ENCODE measurements at regions of chr2 and their contacts with region 1.

Region 1: DNA sequence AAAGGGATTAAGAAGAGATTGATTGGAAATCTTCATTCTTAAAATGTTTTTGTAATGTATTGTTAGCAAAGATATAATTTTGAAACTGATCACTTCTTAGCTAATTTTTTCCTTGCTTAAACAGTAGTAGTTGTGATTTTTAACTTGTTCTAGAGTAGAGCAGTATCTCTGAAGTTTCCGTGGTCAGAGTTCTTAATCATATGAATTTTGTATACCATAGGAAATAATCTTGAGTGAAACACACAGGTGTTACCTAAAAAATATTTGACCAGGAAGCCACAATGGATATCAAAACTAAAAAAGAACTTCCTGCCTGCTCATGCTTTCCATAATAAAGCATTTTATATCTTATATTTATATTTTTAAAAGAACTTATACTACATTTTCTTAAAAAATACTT is 907.1 kb downstream of the ERBB4 start:
- DNase-seq: no peak
- H3K4me3 ChIP-seq: no peak overlapping the region
- H3K27ac ChIP-seq: no peak overlapping the region
- H3K4me1 ChIP-seq: no peaks in the 10 kb centered on the region
- H3K27me3 ChIP-seq: no peaks in the 10 kb centered on the region
- CTCF ChIP-seq: no peak
- EP300 ChIP-seq: no peak
- POLR2A ChIP-seq: no peak

Region 2: DNA sequence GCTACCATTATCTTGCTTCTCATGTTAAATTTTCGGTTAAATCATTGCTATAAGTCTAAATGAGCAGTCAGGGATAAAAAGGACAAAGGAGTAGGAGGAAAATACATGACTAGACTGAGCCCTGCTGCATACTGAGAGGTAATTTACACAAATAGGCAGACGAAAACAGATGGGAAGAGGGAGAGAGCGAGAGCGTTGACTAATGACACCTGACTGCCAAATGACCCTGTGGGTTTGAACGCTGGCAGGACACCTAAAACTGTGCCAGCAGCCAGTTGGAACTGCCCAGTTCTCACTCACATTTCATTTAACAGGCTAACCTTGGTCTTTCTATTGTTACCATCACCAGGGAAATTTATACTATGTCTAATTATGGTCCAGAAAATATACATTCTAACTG is 96.9 kb before region 1 on chr2:
- intact Hi-C with region 1: no loop called
- DNase-seq: no peak
- H3K4me3 ChIP-seq: no peak overlapping the region
- H3K27ac ChIP-seq: no peak overlapping the region
- H3K4me1 ChIP-seq: no peaks in the 10 kb centered on the region
- H3K27me3 ChIP-seq: no peaks in the 10 kb centered on the region
- CTCF ChIP-seq: no peak
- EP300 ChIP-seq: no peak
- POLR2A ChIP-seq: no peak

Region 3: DNA sequence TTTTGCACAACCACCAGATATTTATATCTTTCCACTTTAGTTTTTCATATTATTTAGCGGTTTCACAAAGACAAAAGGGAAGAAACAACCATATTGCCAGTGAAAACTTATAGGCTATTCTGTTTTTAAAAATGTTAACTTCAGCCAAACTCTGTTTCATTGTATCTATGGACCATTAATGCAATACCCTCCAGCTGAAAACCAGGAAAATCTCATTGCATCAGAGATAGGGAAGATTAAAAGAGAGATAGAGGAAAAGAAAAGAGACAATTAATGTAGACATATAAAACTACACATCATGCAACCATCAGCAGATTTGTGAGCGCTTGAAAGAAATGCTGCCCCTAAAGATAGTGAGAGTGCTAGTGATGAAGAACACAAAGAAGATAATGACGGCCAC is 63.1 kb before region 1 on chr2:
- intact Hi-C with region 1: loop called in 1 of 4 experiments (anchors 2 kb)
- DNase-seq: no peak
- H3K4me3 ChIP-seq: no peak overlapping the region
- H3K27ac ChIP-seq: no peak overlapping the region
- H3K4me1 ChIP-seq: no peaks in the 10 kb centered on the region
- H3K27me3 ChIP-seq: no peaks in the 10 kb centered on the region
- CTCF ChIP-seq: no peak
- EP300 ChIP-seq: no peak
- POLR2A ChIP-seq: no peak

Region 4: GRCh38 chr2:211957799-211958385 is 326.4 kb after region 1 on chr2:
- intact Hi-C with region 1: no loop called
- DNase-seq: no peak
- H3K4me3 ChIP-seq: no peak overlapping the region
- H3K27ac ChIP-seq: no peak overlapping the region
- H3K4me1 ChIP-seq: no peaks in the 10 kb centered on the region
- H3K27me3 ChIP-seq: no peaks in the 10 kb centered on the region
- CTCF ChIP-seq: no peak
- EP300 ChIP-seq: no peak
- POLR2A ChIP-seq: no peak

Region 5: GRCh38 chr2:212683346-212684097 is 1052.0 kb after region 1 on chr2:
- intact Hi-C with region 1: no loop called
- DNase-seq: no peak
- H3K4me3 ChIP-seq: no peak overlapping the region
- H3K27ac ChIP-seq: no peak overlapping the region
- H3K4me1 ChIP-seq: no peaks in the 10 kb centered on the region
- H3K27me3 ChIP-seq: no peaks in the 10 kb centered on the region
- CTCF ChIP-seq: no peak
- EP300 ChIP-seq: no peak
- POLR2A ChIP-seq: no peak

Region 6: DNA sequence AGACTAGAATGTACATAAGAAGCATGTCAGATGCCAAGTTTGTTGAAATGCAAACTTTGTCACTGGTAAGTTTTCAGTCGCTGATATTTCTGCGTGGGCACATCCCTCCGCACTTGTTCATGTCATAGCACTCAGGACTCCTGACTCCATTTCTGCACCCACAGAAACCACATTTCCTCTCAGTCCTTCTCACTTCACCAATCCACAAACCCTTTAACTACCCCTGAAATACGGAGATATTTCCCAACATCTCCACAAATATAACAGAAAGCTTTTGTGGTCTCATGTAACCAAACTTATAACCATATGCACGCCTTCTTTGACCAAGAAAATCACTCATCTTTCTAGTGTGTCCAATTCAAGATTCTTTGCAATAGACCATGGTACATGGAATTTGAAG is 1184.0 kb after region 1 on chr2:
- intact Hi-C with region 1: loop called in 1 of 4 experiments (anchors 5 kb)
- DNase-seq: no peak
- H3K4me3 ChIP-seq: no peak overlapping the region
- H3K27ac ChIP-seq: no peak overlapping the region
- H3K4me1 ChIP-seq: no peaks in the 10 kb centered on the region
- H3K27me3 ChIP-seq: no peaks in the 10 kb centered on the region
- CTCF ChIP-seq: no peak
- EP300 ChIP-seq: no peak
- POLR2A ChIP-seq: no peak